ENCODE measurements at regions of chr2 and their contacts with region 1.

Region 1: DNA sequence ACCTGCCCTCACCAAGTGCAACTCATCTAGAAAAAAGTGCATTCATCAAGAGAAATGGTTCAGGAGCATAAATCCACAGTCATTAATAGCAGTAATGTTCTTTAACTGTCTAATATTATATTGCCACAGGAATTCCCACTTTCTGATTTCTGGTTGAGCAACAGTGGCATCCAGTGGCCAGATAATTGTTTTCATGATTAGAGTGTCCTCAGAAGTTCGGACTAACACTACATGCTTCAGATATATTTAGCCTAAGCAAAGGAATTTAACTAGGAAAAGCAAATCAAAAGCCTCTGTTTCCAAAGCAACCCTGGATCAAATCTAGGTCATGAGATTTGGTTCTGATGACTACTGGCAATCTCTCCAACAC is 9.8 kb upstream of the ERBB4 start:
- DNase-seq: no peak
- ATAC-seq: peak; percentile 67

Region 2: GRCh38 chr2:211745295-211746097 is 802.9 kb before region 1 on chr2:
- intact Hi-C with region 1: loop called (anchors 5 kb)
- DNase-seq: no peak
- ATAC-seq: peak; percentile 86

Region 3: DNA sequence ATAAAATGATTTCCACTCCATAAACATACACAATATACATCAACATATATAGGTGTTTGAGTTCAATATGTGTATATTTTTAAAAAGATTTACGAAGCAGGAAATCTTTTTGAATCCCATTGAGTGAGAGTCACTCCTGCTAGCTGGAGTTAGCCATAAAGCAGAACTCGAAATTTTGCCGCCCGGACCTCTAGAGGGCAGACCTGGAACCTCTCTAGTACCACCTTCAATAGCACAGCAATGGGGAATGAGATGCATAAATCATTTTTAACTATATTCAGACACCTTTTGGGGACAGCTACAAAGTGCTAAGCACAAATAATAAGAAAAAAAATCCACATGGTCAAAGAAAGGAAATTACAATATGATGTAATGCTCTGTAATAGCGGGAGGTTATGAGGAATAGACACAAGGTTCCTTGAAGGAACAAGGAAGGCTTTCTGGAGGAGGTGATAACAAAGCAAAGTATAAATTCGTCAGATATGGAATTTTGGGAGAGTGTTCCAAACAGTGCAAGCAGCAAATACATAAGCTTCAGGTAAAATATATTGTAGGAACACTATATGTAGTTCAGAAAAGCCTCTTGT is 543.3 kb before region 1 on chr2:
- intact Hi-C with region 1: loop called (anchors 5 kb)
- DNase-seq: no peak
- ATAC-seq: peak; percentile 60

Region 4: DNA sequence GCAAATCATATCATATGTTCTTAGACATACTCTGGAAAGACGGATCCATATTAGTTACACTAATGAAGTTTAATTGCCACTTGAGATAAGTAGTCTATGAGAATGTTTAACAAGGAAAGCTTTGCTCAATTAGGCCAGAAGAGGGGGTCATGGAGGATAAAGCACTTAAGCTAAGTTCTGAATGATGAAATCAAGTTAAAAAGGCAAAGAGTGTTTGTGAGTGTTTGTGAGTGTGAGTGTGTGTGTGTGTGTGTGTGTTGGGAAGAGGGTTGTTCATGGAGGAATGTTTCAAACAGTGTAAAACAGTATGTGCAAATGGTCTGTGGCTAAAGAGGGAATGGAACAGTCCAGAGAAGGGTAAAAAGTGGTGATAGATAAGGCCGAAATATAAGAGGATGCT is 370.7 kb before region 1 on chr2:
- intact Hi-C with region 1: no loop called
- DNase-seq: no peak
- ATAC-seq: no peak

Region 5: GRCh38 chr2:212311807-212312404 is 236.5 kb before region 1 on chr2:
- intact Hi-C with region 1: no loop called
- DNase-seq: no peak
- ATAC-seq: no peak

Region 6: DNA sequence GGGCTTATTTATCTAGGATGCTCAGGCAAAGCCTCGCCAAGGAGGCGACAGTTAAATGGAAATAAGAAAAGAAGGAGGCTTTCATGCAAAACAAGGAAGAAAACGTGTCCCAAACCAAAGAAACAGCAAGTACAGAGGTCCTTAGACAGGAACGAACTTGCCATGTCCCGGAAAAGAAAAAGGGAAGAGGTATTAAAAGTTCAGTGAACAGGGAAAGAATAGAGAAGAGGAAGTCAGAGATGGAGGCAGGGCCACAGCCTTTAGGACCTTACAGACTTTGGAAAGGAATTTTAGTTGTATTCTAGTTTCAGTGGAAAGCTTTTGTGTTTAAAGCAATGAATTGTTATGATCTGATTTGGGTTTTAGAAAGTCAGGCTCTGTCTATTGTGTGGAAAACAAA is 580.9 kb after region 1 on chr2:
- intact Hi-C with region 1: no loop called
- DNase-seq: no peak
- ATAC-seq: peak; percentile 37